GM12878 (cell line): ENCODE measurements at regions of chr12 and their contacts with region 1.

Region 1: GRCh38 chr12:92827836-92828431 is 101.2 kb downstream of the EEA1 start:
- DNase-seq: peak; percentile 12
- ATAC-seq: peak; percentile 81
- H3K4me3 ChIP-seq: no peak overlapping the region
- H3K27ac ChIP-seq: no peak overlapping the region
- H3K4me1 ChIP-seq: no peaks in the 10 kb centered on the region
- H3K27me3 ChIP-seq: no peaks in the 10 kb centered on the region
- CTCF ChIP-seq: peak; percentile 65 to 81 (median 81)
- EP300 ChIP-seq: no peak
- POLR2A ChIP-seq: no peak
- RAD21 ChIP-seq: peak; percentile 67

Region 2: DNA sequence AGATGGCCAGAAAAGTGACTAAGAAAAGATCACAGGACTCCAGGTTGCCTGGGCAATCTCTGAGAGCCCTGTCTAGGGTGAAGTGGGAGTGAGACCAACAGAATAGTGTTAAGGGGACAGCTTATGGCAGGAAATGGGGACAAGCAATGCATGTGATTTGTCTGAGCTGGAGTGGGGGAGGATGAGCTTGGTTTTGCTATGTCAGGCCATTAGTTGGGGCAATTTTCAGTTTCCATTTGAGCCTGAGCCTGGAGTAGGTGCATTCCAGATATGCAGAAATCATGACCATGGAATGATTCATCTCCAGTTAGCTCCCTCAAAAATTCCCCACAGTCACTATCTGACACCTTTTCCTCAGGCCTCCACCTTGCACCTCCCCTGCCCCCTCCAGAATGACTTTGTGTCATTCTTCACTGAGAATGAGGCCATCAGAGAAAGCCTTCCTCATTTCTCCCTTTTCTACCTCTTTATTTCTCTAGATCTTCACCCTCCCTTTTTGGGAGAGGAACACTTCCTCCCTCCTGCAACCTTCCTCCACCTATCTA is 276.0 kb before region 1 on chr12:
- CTCF ChIA-PET with region 1: no interaction called
- POLR2A ChIA-PET with region 1: no interaction called
- RAD21 ChIA-PET with region 1: no interaction called
- SMC1A ChIA-PET with region 1: no interaction called
- in situ Hi-C with region 1: no loop called
- intact Hi-C with region 1: no loop called
- DNase-seq: peak; percentile 98
- ATAC-seq: peak; percentile 75
- H3K4me3 ChIP-seq: peak overlapping the region; percentile 17; the same call in 1 of the 2 replicates
- H3K27ac ChIP-seq: peak overlapping the region; percentile 98
- H3K4me1 ChIP-seq: peaks cover 67% of the 10 kb centered on the region
- H3K27me3 ChIP-seq: no peaks in the 10 kb centered on the region
- CTCF ChIP-seq: no peak
- EP300 ChIP-seq: peak; percentile 92 to 97
- POLR2A ChIP-seq: peak; percentile 57
- RAD21 ChIP-seq: no peak

Region 3: GRCh38 chr12:92844151-92844763 is 16.3 kb after region 1 on chr12:
- CTCF ChIA-PET with region 1: interaction called, 10 read pairs
- POLR2A ChIA-PET with region 1: interaction called, 3 read pairs
- RAD21 ChIA-PET with region 1: interaction called, 3 read pairs
- SMC1A ChIA-PET with region 1: interaction called, 9 read pairs
- in situ Hi-C with region 1: no loop called
- intact Hi-C with region 1: no loop called
- DNase-seq: no peak
- ATAC-seq: no peak
- H3K4me3 ChIP-seq: no peak overlapping the region
- H3K27ac ChIP-seq: no peak overlapping the region
- H3K4me1 ChIP-seq: no peaks in the 10 kb centered on the region
- H3K27me3 ChIP-seq: no peaks in the 10 kb centered on the region
- CTCF ChIP-seq: no peak
- EP300 ChIP-seq: no peak
- POLR2A ChIP-seq: no peak
- RAD21 ChIP-seq: no peak

Region 4: DNA sequence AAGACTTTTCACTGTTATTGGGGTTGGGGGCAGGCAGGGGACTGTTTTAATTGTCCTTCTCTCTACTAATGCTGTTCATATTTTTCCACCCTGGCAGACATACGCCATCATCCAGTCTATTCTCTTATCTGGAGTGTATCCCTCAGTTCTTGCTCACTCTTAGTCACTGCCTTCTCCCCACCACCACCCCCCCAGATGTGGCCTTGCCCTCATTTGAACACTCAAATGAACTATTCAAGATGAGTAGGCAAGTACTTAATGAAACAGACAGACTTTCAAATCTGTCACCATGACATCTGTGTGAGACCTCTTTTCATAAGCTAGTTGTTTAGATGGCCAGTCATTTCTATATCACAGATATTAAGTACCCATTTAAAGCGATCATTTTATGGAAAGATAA is 559.8 kb after region 1 on chr12:
- CTCF ChIA-PET with region 1: no interaction called
- POLR2A ChIA-PET with region 1: no interaction called
- RAD21 ChIA-PET with region 1: no interaction called
- SMC1A ChIA-PET with region 1: no interaction called
- in situ Hi-C with region 1: no loop called
- intact Hi-C with region 1: loop called (anchors 10 kb)
- DNase-seq: no peak
- ATAC-seq: peak; percentile 76
- H3K4me3 ChIP-seq: peak overlapping the region; percentile 6
- H3K27ac ChIP-seq: peak overlapping the region; percentile 35; the same call in 1 of the 2 replicates
- H3K4me1 ChIP-seq: peaks cover 27% of the 10 kb centered on the region
- H3K27me3 ChIP-seq: no peaks in the 10 kb centered on the region
- CTCF ChIP-seq: no peak
- EP300 ChIP-seq: no peak
- POLR2A ChIP-seq: no peak
- RAD21 ChIP-seq: no peak